Endothelial cell of umbilical vein (primary cell): ENCODE measurements at regions of chr2 and their contacts with region 1.

Region 1: GRCh38 chr2:197113275-197113711 is 186.8 kb upstream of the PGAP1 start:
- DNase-seq: peak; percentile 65
- H3K4me3 ChIP-seq: no peak overlapping the region
- H3K27ac ChIP-seq: no peak overlapping the region
- H3K4me1 ChIP-seq: no peaks in the 10 kb centered on the region
- H3K27me3 ChIP-seq: no peaks in the 10 kb centered on the region
- CTCF ChIP-seq: peak; percentile 24 to 41
- POLR2A ChIP-seq: no peak

Region 2: GRCh38 chr2:197097578-197098366 is 15.5 kb before region 1 on chr2:
- CTCF ChIA-PET with region 1: interaction called, 12 read pairs
- POLR2A ChIA-PET with region 1: no interaction called
- dilution Hi-C with region 1: no loop called
- intact Hi-C with region 1: no loop called
- DNase-seq: no peak
- H3K4me3 ChIP-seq: no peak overlapping the region
- H3K27ac ChIP-seq: no peak overlapping the region
- H3K4me1 ChIP-seq: no peaks in the 10 kb centered on the region
- H3K27me3 ChIP-seq: no peaks in the 10 kb centered on the region
- CTCF ChIP-seq: no peak
- POLR2A ChIP-seq: no peak

Region 3: GRCh38 chr2:197159661-197160211 is 46.4 kb after region 1 on chr2:
- CTCF ChIA-PET with region 1: interaction called, 30 read pairs
- POLR2A ChIA-PET with region 1: no interaction called
- dilution Hi-C with region 1: no loop called
- intact Hi-C with region 1: no loop called
- DNase-seq: peak; percentile 95
- H3K4me3 ChIP-seq: peak overlapping the region in 1 of 3 experiments; percentile 48
- H3K27ac ChIP-seq: peak overlapping the region; percentile 95
- H3K4me1 ChIP-seq: peaks cover 47% of the 10 kb centered on the region
- H3K27me3 ChIP-seq: no peaks in the 10 kb centered on the region
- CTCF ChIP-seq: no peak
- POLR2A ChIP-seq: no peak

Region 4: GRCh38 chr2:197179744-197180498 is 66.6 kb after region 1 on chr2:
- CTCF ChIA-PET with region 1: interaction called, 21 read pairs
- POLR2A ChIA-PET with region 1: no interaction called
- dilution Hi-C with region 1: no loop called
- intact Hi-C with region 1: no loop called
- DNase-seq: peak; percentile 82
- H3K4me3 ChIP-seq: no peak overlapping the region
- H3K27ac ChIP-seq: peak overlapping the region; percentile 76
- H3K4me1 ChIP-seq: peaks cover 15% of the 10 kb centered on the region
- H3K27me3 ChIP-seq: no peaks in the 10 kb centered on the region
- CTCF ChIP-seq: no peak
- POLR2A ChIP-seq: no peak

Region 5: DNA sequence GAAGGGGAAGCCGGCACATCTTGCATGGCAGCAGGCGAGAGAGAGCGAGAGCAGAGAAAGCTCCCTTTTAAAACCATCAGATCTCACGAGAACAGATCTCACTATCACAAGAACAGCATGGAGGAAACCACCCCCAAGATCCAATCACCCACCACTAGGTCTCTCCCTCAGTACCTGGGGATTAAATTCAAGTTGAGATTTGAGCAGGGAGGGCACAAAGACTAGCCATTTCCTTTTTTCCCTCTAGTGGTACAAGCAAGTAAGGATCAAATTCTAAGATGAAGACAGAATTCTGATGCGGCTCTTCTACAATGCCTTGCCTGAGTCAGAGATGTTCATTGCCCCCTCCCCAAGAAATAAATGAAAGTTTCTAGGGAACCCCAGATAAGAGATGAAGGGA is 242.8 kb after region 1 on chr2:
- CTCF ChIA-PET with region 1: interaction called, 5 read pairs
- POLR2A ChIA-PET with region 1: no interaction called
- dilution Hi-C with region 1: no loop called
- intact Hi-C with region 1: loop called (anchors 5 kb)
- DNase-seq: no peak
- H3K4me3 ChIP-seq: no peak overlapping the region
- H3K27ac ChIP-seq: no peak overlapping the region
- H3K4me1 ChIP-seq: no peaks in the 10 kb centered on the region
- H3K27me3 ChIP-seq: no peaks in the 10 kb centered on the region
- CTCF ChIP-seq: peak in 1 of 2 donors; percentile 31
- POLR2A ChIP-seq: no peak

Region 6: DNA sequence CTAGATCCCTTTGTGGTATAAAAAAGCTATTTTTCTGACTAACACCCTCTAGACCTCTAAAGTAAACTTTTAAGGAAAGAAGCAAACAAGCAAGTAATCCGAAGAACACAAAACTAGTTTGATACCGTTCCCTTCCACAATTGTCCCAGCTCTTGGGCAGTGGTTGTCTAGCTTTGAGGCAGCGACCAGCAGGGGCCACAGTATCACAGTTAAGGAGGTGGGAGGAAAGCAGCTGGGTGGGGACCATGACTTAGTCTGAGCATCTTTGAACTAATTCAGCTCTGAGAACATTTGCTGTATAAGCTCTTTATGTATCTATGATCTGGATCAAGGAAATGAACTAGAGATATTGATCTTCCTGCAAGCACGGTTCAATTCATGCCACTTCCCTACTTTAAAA is 270.5 kb after region 1 on chr2:
- CTCF ChIA-PET with region 1: interaction called, 24 read pairs
- POLR2A ChIA-PET with region 1: no interaction called
- dilution Hi-C with region 1: no loop called
- intact Hi-C with region 1: no loop called
- DNase-seq: no peak
- H3K4me3 ChIP-seq: no peak overlapping the region
- H3K27ac ChIP-seq: no peak overlapping the region
- H3K4me1 ChIP-seq: no peaks in the 10 kb centered on the region
- H3K27me3 ChIP-seq: peaks cover 0 to 4% of the 10 kb centered on the region in 2 experiments
- CTCF ChIP-seq: no peak
- POLR2A ChIP-seq: no peak